CD8-positive, alpha-beta T cell (primary cell): ENCODE measurements at regions of chr17 and their contacts with region 1.

Region 1: GRCh38 chr17:20009302-20010098 is at the start of gene SPECC1:
- DNase-seq: peak; percentile 69 to 93 (median 83)
- ATAC-seq: peak; percentile 96
- H3K4me3 ChIP-seq: peak within 1 kb of the TSS; percentile 62 to 80
- H3K4me3 Mint-ChIP-seq: peak within 1 kb of the TSS; percentile 88
- H3K27ac ChIP-seq: peak within 1 kb of the TSS in 1 of 2 experiments; percentile 42
- H3K27ac Mint-ChIP-seq: no peak within 1 kb of the TSS
- H3K4me1 ChIP-seq: peaks cover 5% of the 10 kb centered on the region
- H3K4me1 Mint-ChIP-seq: peaks cover 13% of the 10 kb centered on the region
- H3K27me3 ChIP-seq: peaks cover 0 to 4% of the 10 kb centered on the region in 2 experiments
- H3K27me3 Mint-ChIP-seq: peaks cover 38% of the 10 kb centered on the region
- CTCF ChIP-seq: peak; percentile 92
- total RNA-seq, gene SPECC1: 6.9 to 8.8 TPM

Region 2: GRCh38 chr17:19812407-19812806 is 197.1 kb before region 1 on chr17:
- CTCF ChIA-PET with region 1: no interaction called
- POLR2A ChIA-PET with region 1: no interaction called
- intact Hi-C with region 1: no loop called
- DNase-seq: peak in 1 of 9 experiments; percentile 14
- ATAC-seq: no peak
- H3K4me3 ChIP-seq: no peak overlapping the region
- H3K4me3 Mint-ChIP-seq: no peak overlapping the region
- H3K27ac ChIP-seq: no peak overlapping the region
- H3K27ac Mint-ChIP-seq: no peak overlapping the region
- H3K4me1 ChIP-seq: no peaks in the 10 kb centered on the region
- H3K4me1 Mint-ChIP-seq: no peaks in the 10 kb centered on the region
- H3K27me3 ChIP-seq: no peaks in the 10 kb centered on the region
- H3K27me3 Mint-ChIP-seq: no peaks in the 10 kb centered on the region
- CTCF ChIP-seq: no peak

Region 3: GRCh38 chr17:19867064-19867313 is 142.5 kb before region 1 on chr17:
- CTCF ChIA-PET with region 1: no interaction called
- POLR2A ChIA-PET with region 1: no interaction called
- intact Hi-C with region 1: loop called in 1 of 2 experiments (anchors 5 kb)
- DNase-seq: peak; percentile 19 to 74 (median 49)
- ATAC-seq: peak; percentile 50
- H3K4me3 ChIP-seq: peak overlapping the region; percentile 68 to 80
- H3K4me3 Mint-ChIP-seq: peak overlapping the region; percentile 81
- H3K27ac ChIP-seq: peak overlapping the region; percentile 54 to 68
- H3K27ac Mint-ChIP-seq: peak overlapping the region; percentile 79
- H3K4me1 ChIP-seq: peaks cover 46% of the 10 kb centered on the region
- H3K4me1 Mint-ChIP-seq: peaks cover 42% of the 10 kb centered on the region
- H3K27me3 ChIP-seq: no peaks in the 10 kb centered on the region
- H3K27me3 Mint-ChIP-seq: no peaks in the 10 kb centered on the region
- CTCF ChIP-seq: peak; percentile 3

Region 4: GRCh38 chr17:19977311-19978208 is 31.9 kb before region 1 on chr17 and contains the start of gene AKAP10:
- CTCF ChIA-PET with region 1: interaction called, 16 read pairs
- POLR2A ChIA-PET with region 1: interaction called, 9 read pairs
- intact Hi-C with region 1: loop called (anchors 1 kb)
- DNase-seq: peak; percentile 87 to 95 (median 93)
- ATAC-seq: peak; percentile 84
- H3K4me3 ChIP-seq: peak within 1 kb of the TSS; percentile 67 to 89
- H3K4me3 Mint-ChIP-seq: peak within 1 kb of the TSS; percentile 94
- H3K27ac ChIP-seq: peak within 1 kb of the TSS; percentile 76 to 95
- H3K27ac Mint-ChIP-seq: peak within 1 kb of the TSS; percentile 95
- H3K4me1 ChIP-seq: peaks cover 29% of the 10 kb centered on the region
- H3K4me1 Mint-ChIP-seq: peaks cover 53% of the 10 kb centered on the region
- H3K27me3 ChIP-seq: no peaks in the 10 kb centered on the region
- H3K27me3 Mint-ChIP-seq: no peaks in the 10 kb centered on the region
- CTCF ChIP-seq: no peak
- total RNA-seq, gene AKAP10: 21.5 to 29.6 TPM

Region 5: GRCh38 chr17:19992803-19993713 is 16.4 kb before region 1 on chr17:
- CTCF ChIA-PET with region 1: interaction called, 28 read pairs
- POLR2A ChIA-PET with region 1: no interaction called
- intact Hi-C with region 1: loop called (anchors 1 kb)
- DNase-seq: peak; percentile 39 to 87 (median 76)
- ATAC-seq: peak; percentile 99
- H3K4me3 ChIP-seq: no peak overlapping the region
- H3K4me3 Mint-ChIP-seq: no peak overlapping the region
- H3K27ac ChIP-seq: no peak overlapping the region
- H3K27ac Mint-ChIP-seq: no peak overlapping the region
- H3K4me1 ChIP-seq: peaks cover 3% of the 10 kb centered on the region
- H3K4me1 Mint-ChIP-seq: peaks cover 4% of the 10 kb centered on the region
- H3K27me3 ChIP-seq: no peaks in the 10 kb centered on the region
- H3K27me3 Mint-ChIP-seq: peaks cover 5% of the 10 kb centered on the region
- CTCF ChIP-seq: peak; percentile 59

Region 6: GRCh38 chr17:20022701-20023100 is 13.2 kb after region 1 on chr17:
- CTCF ChIA-PET with region 1: interaction called, 13 read pairs
- POLR2A ChIA-PET with region 1: no interaction called
- intact Hi-C with region 1: no loop called
- DNase-seq: no peak
- ATAC-seq: no peak
- H3K4me3 ChIP-seq: no peak overlapping the region
- H3K4me3 Mint-ChIP-seq: no peak overlapping the region
- H3K27ac ChIP-seq: no peak overlapping the region
- H3K27ac Mint-ChIP-seq: no peak overlapping the region
- H3K4me1 ChIP-seq: no peaks in the 10 kb centered on the region
- H3K4me1 Mint-ChIP-seq: no peaks in the 10 kb centered on the region
- H3K27me3 ChIP-seq: no peaks in the 10 kb centered on the region
- H3K27me3 Mint-ChIP-seq: peaks cover 4% of the 10 kb centered on the region
- CTCF ChIP-seq: no peak

Region 7: GRCh38 chr17:20121359-20122253 is 112.1 kb after region 1 on chr17:
- CTCF ChIA-PET with region 1: interaction called, 5 read pairs
- POLR2A ChIA-PET with region 1: no interaction called
- intact Hi-C with region 1: loop called in 1 of 2 experiments (anchors 5 kb)
- DNase-seq: peak; percentile 36 to 81 (median 71)
- ATAC-seq: peak; percentile 68
- H3K4me3 ChIP-seq: no peak overlapping the region
- H3K4me3 Mint-ChIP-seq: no peak overlapping the region
- H3K27ac ChIP-seq: no peak overlapping the region
- H3K27ac Mint-ChIP-seq: no peak overlapping the region
- H3K4me1 ChIP-seq: no peaks in the 10 kb centered on the region
- H3K4me1 Mint-ChIP-seq: peaks cover 2% of the 10 kb centered on the region
- H3K27me3 ChIP-seq: no peaks in the 10 kb centered on the region
- H3K27me3 Mint-ChIP-seq: peaks cover 2% of the 10 kb centered on the region
- CTCF ChIP-seq: peak; percentile 82

Region 8: DNA sequence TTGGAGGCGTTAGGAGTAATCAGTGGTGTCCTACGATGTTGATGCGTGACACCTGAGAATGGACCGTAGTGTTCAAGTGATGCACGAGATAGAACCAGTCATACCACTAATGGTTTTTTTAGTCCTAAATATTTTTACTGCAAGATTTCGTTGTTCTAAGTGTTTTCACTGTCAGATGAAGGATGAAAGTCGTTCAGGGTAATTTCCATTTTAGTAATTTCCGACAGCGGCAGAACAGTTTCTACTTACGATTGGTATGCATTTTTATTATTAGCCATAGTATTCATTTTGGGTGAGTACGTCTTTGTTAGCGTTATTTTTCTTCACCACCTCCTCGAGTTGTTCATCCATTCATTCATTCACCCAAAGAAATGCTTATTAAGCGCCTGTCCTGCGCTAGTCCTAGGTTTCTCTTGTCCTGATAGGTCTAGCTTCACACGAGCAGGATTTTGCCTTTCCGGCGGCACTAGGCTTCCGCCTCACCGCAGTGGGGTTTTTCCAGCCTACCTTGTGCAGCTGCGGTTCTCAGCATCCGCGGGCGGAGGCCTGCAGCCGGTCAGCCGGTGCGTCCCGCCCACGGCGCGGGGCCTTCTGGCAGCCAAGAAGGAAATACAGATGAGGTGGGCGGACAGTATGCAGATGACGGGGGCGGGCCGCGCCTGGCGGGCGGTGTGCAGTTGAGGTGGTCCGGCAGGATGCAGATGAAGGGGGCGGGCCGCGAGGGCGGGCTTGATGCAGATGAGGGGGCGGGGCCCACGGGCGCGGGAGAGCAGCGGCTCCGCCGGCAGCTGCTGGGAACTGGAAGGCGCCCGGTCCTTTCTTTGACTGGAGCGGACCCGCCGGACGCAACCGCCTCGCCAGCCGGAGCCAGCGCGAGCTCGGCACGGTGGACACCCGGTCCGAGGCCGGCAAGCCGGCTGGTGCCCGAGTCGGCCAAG is 146.0 kb after region 1 on chr17:
- CTCF ChIA-PET with region 1: interaction called, 3 read pairs
- POLR2A ChIA-PET with region 1: no interaction called
- intact Hi-C with region 1: loop called in 1 of 2 experiments (anchors 1 kb)
- DNase-seq: peak; percentile 87 to 98 (median 95)
- ATAC-seq: peak; percentile 98
- H3K4me3 ChIP-seq: peak overlapping the region; percentile 48 to 70
- H3K4me3 Mint-ChIP-seq: no peak overlapping the region
- H3K27ac ChIP-seq: peak overlapping the region; percentile 21 to 47
- H3K27ac Mint-ChIP-seq: no peak overlapping the region
- H3K4me1 ChIP-seq: peaks cover 16% of the 10 kb centered on the region
- H3K4me1 Mint-ChIP-seq: peaks cover 3% of the 10 kb centered on the region
- H3K27me3 ChIP-seq: no peaks in the 10 kb centered on the region
- H3K27me3 Mint-ChIP-seq: no peaks in the 10 kb centered on the region
- CTCF ChIP-seq: no peak